Spleen (tissue), 13 donors: ENCODE measurements at regions of chr13 and their contacts with region 1.

Region 1: GRCh38 chr13:94601446-94602431 is at the start of gene GPR180:
- DNase-seq: peak; percentile 97
- H3K4me3 ChIP-seq: peak within 1 kb of the TSS; percentile 70 to 93 (median 90)
- H3K27ac ChIP-seq: peak within 1 kb of the TSS; percentile 58 to 92 (median 84)
- H3K4me1 ChIP-seq: peaks cover 3 to 29% (median 20%) of the 10 kb centered on the region in 6 donors
- H3K27me3 ChIP-seq: no peaks in the 10 kb centered on the region
- CTCF ChIP-seq: peak in 2 of 11 experiments; percentile 20 to 31
- POLR2A ChIP-seq: peak in 2 of 3 donors; percentile 35 to 66
- total RNA-seq, gene GPR180: 3.3 to 8.6 (median 4.3) TPM

Region 2: GRCh38 chr13:94371855-94372254 is 229.9 kb before region 1 on chr13:
- intact Hi-C with region 1: no loop called
- DNase-seq: no peak
- H3K4me3 ChIP-seq: no peak overlapping the region
- H3K27ac ChIP-seq: no peak overlapping the region
- H3K4me1 ChIP-seq: no peaks in the 10 kb centered on the region
- H3K27me3 ChIP-seq: no peaks in the 10 kb centered on the region
- CTCF ChIP-seq: no peak
- POLR2A ChIP-seq: no peak

Region 3: GRCh38 chr13:94549232-94550061 is 52.3 kb before region 1 on chr13:
- intact Hi-C with region 1: loop called (anchors 5 kb)
- DNase-seq: peak; percentile 98
- H3K4me3 ChIP-seq: peak overlapping the region; percentile 41 to 82 (median 64)
- H3K27ac ChIP-seq: peak overlapping the region; percentile 87 to 94 (median 90)
- H3K4me1 ChIP-seq: peaks cover 6 to 23% (median 13%) of the 10 kb centered on the region in 6 donors
- H3K27me3 ChIP-seq: peaks cover 0 to 9% (median 0%) of the 10 kb centered on the region in 7 donors
- CTCF ChIP-seq: peak in 4 of 11 experiments; percentile 4 to 38 (median 21)
- POLR2A ChIP-seq: peak in 1 of 3 donors; percentile 42

Region 4: DNA sequence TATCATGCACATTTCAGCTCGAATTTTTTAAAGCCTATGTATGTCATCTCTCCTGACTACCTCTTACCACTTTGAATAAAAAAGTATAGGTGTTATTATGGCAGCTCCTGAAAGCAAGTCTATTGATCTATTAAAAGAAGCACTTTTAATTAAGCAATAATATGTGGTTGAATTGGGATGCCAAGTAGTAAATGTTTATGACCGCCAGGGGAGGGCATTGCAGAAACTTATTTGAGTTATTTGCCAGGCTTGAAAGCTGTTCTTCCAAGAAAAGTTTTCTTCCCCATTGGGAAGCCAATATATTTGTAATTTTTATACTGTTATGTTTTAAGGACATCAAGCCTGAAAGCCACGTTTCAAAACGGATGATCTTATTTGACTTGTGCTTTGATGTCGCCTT is 198.7 kb after region 1 on chr13:
- intact Hi-C with region 1: no loop called
- DNase-seq: no peak
- H3K4me3 ChIP-seq: no peak overlapping the region
- H3K27ac ChIP-seq: no peak overlapping the region
- H3K4me1 ChIP-seq: no peaks in the 10 kb centered on the region
- H3K27me3 ChIP-seq: no peaks in the 10 kb centered on the region
- CTCF ChIP-seq: no peak
- POLR2A ChIP-seq: no peak